Cardiac septum (tissue), 1 donor: ENCODE measurements at regions of chr3 and their contacts with region 1.

Region 1: DNA sequence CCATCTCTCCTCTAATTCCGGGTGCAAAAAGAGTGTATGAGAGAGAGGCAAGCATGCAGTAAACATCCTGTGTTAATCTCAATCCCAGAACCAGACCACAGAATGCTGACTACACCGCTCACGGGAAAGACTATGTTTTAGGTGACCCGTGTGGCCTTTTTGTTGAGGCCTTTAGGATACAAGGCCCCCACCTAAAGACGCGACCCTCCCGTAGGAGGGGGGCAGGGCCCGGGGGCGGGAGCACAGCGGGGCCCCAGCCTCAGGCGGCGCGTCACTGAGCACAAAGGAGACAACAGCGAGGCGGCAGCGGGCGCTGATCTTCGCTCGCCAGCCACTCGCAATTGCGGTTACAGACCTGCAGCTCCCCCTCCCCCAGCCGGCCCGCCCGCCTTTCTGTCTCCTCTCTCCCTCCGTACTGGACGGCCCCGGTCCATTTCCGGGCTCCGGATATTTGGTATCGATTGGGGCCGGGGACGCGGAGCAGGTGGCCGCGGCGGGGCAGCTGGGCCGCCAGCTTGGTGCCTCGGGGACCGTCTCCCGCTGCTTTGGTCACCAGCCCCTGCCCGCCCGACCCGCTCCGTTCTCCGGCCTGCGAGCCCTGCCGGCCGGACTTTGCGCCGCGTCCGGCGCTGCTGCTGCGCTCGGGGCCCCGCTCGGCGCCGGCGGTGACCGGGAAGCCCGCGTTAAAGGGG is at the start of gene CCDC50:
- DNase-seq: peak; percentile 91
- total RNA-seq, gene CCDC50: 51.0 TPM

Region 2: GRCh38 chr3:191244242-191244867 is 84.8 kb before region 1 on chr3:
- intact Hi-C with region 1: no loop called
- DNase-seq: no peak

Region 3: DNA sequence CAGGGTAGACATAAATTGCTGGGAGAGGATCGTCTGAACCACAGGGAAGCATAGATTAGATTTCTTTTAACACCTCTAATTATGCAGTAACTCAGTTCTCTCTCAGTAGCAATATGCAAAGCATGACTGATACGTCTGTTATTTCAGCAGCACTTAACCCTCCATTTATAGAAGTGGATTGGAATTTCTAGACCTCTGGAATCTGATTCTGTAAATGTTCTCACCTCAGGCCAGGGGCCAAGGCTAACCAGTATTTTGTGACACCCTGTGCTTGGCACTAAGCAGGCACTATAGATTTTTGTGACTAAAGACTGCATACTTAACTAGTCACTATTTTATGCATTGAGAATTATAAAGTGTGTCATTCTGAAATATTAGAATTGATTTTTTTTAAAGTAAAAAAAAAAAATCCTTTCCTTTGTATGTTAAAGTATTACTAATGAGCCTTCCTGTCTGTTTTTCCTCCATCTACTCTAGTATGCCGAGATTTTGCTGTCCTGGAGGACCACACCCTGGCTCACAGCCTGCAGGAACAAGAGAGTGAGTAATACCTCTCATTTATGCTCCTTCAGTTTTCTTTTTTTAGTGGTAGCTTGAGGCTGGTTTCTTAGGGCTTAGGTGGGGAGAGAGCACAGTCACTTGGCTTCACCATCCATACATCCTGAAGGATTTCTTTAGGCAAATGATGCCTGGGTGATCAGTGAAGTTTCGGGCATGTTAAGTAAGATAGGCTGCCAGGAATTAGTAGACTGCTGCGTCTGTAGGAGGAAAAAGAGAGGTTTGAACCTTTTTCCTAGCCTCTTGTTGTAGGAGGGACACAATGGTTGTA is 27.7 kb after region 1 on chr3:
- intact Hi-C with region 1: no loop called
- DNase-seq: no peak

Region 4: DNA sequence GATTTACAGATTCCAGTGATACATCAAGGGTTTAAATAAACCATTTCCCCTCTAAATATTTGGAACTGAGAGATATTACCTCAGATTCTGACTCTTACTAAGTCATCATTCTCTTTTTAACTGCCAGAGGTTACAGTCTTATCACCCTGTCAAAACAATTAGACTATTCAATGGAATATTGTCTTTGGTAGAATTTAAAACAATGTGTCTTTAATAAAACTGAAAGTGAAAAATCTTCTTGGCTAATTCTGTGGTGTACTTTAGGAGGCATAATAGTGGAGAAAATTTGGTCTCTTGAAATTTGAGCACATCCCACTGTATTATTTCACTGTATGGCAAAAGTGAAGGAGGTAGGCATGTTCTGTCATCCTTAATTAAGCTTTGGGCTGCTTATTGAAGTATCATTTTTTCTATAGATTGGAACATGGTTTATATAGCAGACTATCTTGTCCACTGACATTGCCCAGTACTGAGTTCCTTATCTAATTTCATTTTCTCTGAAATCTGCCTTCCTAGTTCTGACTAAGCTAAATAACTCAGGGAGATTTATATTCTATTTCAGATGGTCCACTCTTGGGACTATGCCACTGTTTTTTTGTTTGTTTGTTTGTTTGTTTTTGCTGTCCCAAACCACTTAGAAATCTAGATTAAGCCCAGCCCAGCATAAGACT is 49.2 kb after region 1 on chr3:
- intact Hi-C with region 1: loop called (anchors 2 kb)
- DNase-seq: no peak

Region 5: GRCh38 chr3:191624299-191624698 is 295.2 kb after region 1 on chr3:
- intact Hi-C with region 1: no loop called
- DNase-seq: no peak